CD8-positive, alpha-beta memory T cell (primary cell): ENCODE measurements at regions of chr13 and their contacts with region 1.

Region 1: DNA sequence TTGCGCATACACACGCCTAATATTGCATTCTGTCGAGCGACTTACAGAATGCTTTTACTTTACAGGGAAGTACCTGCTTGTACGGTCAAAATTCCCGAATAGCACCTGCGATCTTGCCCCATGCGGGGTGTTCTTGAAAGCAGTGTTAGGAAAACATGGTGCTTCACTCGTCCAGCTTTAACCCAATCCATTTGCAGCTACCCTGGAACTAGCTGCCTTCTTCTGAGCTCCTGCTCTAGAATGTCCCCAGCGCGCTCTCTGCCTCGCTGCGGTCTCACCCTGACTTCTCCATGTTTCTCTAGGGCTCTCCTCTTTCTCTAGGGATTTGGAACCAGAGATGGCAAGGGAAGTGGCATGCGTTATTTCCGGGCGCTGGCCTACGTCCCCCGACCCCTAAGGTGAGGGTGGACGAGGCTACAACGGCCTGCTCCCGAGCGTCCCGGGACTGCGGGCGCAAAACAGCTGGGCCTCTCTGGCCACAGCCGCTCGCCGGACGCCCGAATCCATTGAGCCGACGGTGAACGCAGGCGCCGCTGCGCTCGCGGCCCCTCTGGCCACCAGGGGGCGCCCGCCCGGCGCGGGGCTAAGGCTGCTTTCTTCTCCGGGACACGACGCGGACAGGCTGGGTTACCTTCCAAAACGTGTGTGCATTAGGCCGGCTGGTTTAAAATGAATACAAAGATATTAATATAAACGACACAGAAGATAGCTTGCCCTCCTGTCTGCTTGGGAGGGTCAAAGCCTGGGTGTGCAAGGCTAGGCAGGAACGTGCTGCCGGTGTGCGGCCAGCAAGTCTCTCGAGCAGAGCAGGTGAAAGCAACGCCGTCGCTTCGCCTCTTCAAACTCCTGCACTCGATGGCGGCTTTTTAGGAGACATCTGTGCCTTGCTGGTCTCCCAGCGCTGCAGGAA is 1.8 kb upstream of the SPRY2 start:
- DNase-seq: peak; percentile 41 to 68 (median 51)
- H3K4me3 ChIP-seq: peak overlapping the region; percentile 47
- H3K4me3 Mint-ChIP-seq: peak overlapping the region in 6 of 7 donors; percentile 81 to 90 (median 86)
- H3K27ac ChIP-seq: no peak overlapping the region
- H3K27ac Mint-ChIP-seq: peak overlapping the region in 5 of 8 donors; percentile 1 to 79 (median 54)
- H3K4me1 ChIP-seq: peaks cover 8% of the 10 kb centered on the region
- H3K4me1 Mint-ChIP-seq: peaks cover 13 to 24% (median 23%) of the 10 kb centered on the region in 3 donors
- H3K27me3 ChIP-seq: peaks cover 12% of the 10 kb centered on the region
- H3K27me3 Mint-ChIP-seq: peaks cover 9 to 43% of the 10 kb centered on the region in 2 donors

Region 2: GRCh38 chr13:79995334-79995733 is 347.4 kb before region 1 on chr13:
- CTCF ChIA-PET with region 1: no interaction called
- POLR2A ChIA-PET with region 1: no interaction called
- DNase-seq: no peak
- H3K4me3 ChIP-seq: no peak overlapping the region
- H3K4me3 Mint-ChIP-seq: no peak overlapping the region
- H3K27ac ChIP-seq: no peak overlapping the region
- H3K27ac Mint-ChIP-seq: no peak overlapping the region
- H3K4me1 ChIP-seq: no peaks in the 10 kb centered on the region
- H3K4me1 Mint-ChIP-seq: no peaks in the 10 kb centered on the region
- H3K27me3 ChIP-seq: no peaks in the 10 kb centered on the region
- H3K27me3 Mint-ChIP-seq: peaks cover 0 to 2% of the 10 kb centered on the region in 2 donors

Region 3: DNA sequence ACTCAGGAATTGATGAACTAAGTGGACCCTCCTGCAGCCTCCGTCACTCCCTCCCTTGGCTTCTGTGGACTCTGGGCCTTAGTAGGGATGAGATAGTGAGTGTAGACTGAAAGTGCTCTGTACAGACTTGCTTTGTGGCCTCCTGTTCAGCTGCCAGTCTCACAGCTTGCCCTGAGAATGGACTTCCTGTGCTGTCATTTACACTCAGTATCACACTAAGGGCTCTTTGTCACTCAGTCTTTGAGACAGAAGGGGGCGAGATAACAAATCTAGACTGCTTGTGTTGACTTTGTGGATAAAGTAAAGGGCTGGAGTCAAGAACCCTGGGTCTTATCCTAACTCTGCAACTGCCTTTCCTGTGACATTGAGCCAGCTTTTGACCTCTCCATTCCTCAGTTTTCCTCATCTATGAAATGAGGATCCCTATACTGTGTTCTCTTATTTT is 19.2 kb after region 1 on chr13:
- CTCF ChIA-PET with region 1: interaction called, 10 read pairs
- POLR2A ChIA-PET with region 1: no interaction called
- DNase-seq: no peak
- H3K4me3 ChIP-seq: no peak overlapping the region
- H3K4me3 Mint-ChIP-seq: no peak overlapping the region
- H3K27ac ChIP-seq: no peak overlapping the region
- H3K27ac Mint-ChIP-seq: peak overlapping the region in 1 of 8 donors; percentile 52
- H3K4me1 ChIP-seq: no peaks in the 10 kb centered on the region
- H3K4me1 Mint-ChIP-seq: peaks cover 3 to 5% (median 4%) of the 10 kb centered on the region in 3 donors
- H3K27me3 ChIP-seq: no peaks in the 10 kb centered on the region
- H3K27me3 Mint-ChIP-seq: no peaks in the 10 kb centered on the region